ENCODE measurements at regions of chr5 and their contacts with region 1.

Region 1: GRCh38 chr5:179907570-179908324 is at the start of gene TBC1D9B:
- DNase-seq: peak; percentile 73
- H3K4me3 Mint-ChIP-seq: peak within 1 kb of the TSS; percentile 98
- H3K27ac Mint-ChIP-seq: peak within 1 kb of the TSS; percentile 82
- H3K4me1 Mint-ChIP-seq: peaks cover 7% of the 10 kb centered on the region
- H3K27me3 Mint-ChIP-seq: no peaks in the 10 kb centered on the region
- CTCF ChIP-seq: peak; percentile 34
- total RNA-seq, gene TBC1D9B: 162 and 166 TPM in 2 replicates

Region 2: DNA sequence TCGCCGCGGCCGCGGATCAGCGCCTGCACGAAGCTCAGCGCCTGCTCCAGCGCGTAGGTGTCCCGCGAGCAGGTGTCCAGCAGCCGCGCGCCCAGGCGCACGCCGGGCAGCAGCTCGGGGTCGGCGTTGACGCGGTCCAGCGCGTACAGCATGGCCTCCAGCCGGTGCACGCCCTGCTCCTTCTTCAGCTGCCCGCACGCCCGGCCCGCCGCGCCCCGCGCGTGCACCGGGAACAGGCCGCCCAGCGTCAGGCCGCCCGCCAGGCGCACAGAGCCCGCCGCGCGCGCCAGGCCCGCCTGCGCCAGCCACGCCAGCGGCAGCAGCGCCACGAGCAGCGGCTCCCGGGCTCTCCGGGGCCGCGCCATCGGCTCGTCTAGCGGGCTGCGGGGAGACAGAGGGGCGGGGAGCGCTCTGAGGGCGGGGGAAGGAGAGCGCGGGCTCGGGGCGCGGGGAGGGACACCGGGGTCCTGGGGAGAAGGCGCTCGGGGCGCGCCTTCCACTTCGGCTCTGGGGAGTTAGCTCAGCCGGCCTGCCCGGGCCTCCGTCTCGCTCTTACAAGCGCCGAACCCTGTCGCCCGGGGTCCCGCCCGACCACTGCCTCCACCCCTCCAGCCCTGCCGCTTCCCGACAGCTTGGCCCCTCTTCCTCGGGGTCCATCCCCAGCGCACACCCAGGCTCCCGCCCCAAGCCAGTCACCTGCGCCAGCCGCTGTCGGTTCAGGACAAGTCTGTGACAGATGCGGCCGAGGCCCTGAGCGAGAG is 913.0 kb before region 1 on chr5 and contains the start of gene GRM6:
- CTCF ChIA-PET with region 1: no interaction called
- POLR2A ChIA-PET with region 1: no interaction called
- intact Hi-C with region 1: no loop called
- DNase-seq: no peak
- H3K4me3 Mint-ChIP-seq: no peak within 1 kb of the TSS
- H3K27ac Mint-ChIP-seq: no peak within 1 kb of the TSS
- H3K4me1 Mint-ChIP-seq: no peaks in the 10 kb centered on the region
- H3K27me3 Mint-ChIP-seq: no peaks in the 10 kb centered on the region
- CTCF ChIP-seq: no peak
- total RNA-seq, gene GRM6: not detected in 2 replicates

Region 3: DNA sequence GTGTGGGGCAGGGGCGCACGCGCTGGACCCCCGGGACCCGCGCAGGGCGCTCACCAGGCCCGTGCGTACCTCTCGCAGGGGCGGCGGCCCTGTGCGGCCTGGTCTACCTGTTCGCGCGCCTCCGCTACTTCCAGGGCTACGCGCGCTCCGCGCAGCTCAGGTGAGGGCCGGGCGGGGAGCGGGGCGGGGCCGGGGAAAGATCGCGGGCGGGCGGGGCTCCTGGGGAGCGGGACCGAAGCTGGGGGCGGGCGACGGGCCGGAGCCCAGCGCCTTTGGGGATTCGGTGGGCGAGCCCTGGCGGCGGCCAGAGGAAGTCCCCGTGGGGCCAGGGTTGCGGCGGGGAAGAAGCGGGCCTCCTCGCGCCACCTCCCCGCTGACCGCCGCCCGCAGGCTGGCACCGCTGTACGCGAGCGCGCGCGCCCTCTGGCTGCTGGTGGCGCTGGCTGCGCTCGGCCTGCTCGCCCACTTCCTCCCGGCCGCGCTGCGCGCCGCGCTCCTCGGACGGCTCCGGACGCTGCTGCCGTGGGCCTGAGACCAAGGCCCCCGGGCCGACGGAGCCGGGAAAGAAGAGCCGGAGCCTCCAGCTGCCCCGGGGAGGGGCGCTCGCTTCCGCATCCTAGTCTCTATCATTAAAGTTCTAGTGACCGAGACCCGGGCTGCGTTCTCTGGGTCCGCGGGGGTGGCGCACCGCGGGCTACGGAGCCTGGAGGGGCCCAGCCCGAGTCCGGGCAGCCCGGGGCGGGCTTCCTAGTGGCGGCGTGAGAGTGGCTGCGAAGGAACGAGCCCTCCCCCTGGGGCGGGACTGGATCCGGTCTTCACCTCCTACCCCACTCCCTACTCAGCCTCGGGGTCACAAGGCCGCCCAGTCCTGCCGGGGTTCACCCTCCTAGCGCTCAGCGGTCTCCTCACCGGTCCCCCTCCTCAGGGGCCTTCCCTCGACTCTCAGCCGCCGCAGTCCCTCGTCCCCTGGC is 111.6 kb before region 1 on chr5:
- CTCF ChIA-PET with region 1: no interaction called
- POLR2A ChIA-PET with region 1: no interaction called
- intact Hi-C with region 1: loop called (anchors 2 kb)
- DNase-seq: peak; percentile 88
- H3K4me3 Mint-ChIP-seq: peak overlapping the region; percentile 71
- H3K27ac Mint-ChIP-seq: peak overlapping the region; percentile 26
- H3K4me1 Mint-ChIP-seq: peaks cover 8% of the 10 kb centered on the region
- H3K27me3 Mint-ChIP-seq: no peaks in the 10 kb centered on the region
- CTCF ChIP-seq: peak; percentile 86

Region 4: GRCh38 chr5:179967489-179967888 is 59.7 kb after region 1 on chr5:
- CTCF ChIA-PET with region 1: no interaction called
- POLR2A ChIA-PET with region 1: no interaction called
- intact Hi-C with region 1: no loop called
- DNase-seq: no peak
- H3K4me3 Mint-ChIP-seq: no peak overlapping the region
- H3K27ac Mint-ChIP-seq: no peak overlapping the region
- H3K4me1 Mint-ChIP-seq: no peaks in the 10 kb centered on the region
- H3K27me3 Mint-ChIP-seq: no peaks in the 10 kb centered on the region
- CTCF ChIP-seq: no peak

Region 5: DNA sequence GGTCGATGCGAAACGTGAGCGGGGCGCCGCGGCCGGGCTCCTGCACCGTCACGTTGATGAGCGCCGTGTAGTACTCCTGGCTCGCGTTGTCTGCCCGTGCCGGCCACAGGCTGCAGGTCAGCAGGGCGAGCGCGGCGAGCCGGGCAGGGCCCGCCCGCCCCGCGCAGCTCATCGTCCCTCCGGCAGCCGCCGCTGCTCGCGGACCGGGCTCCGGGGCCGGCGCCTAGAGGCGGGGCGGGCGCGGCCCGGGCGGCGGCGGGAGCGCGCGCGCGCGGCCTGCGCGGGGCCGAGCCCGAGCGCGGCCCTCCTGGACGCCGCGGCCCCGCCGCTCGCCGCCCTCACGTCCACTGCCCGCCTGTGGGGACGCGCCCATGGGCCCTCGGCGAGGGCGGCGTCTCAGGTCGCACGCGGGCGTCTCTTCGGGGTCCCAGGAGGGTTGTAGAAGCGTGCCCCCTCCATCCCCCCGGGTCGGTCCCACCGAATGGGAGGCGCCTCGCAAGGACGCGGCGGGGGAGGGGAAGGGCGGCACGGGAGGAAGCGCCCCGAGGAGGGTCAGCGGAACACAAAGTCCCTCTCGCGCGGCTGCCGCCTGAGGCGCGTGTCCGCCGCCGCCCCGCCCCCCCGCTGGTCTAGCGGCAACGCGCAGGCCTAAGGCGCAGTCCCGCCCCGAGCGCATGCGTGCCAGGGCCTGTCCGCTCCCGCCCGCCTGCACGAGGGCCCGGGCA is 163.9 kb after region 1 on chr5 and contains the start of gene RNF130:
- CTCF ChIA-PET with region 1: no interaction called
- POLR2A ChIA-PET with region 1: no interaction called
- intact Hi-C with region 1: loop called (anchors 5 kb)
- DNase-seq: peak; percentile 94
- H3K4me3 Mint-ChIP-seq: peak within 1 kb of the TSS; percentile 95
- H3K27ac Mint-ChIP-seq: peak within 1 kb of the TSS; percentile 87
- H3K4me1 Mint-ChIP-seq: peaks cover 23% of the 10 kb centered on the region
- H3K27me3 Mint-ChIP-seq: no peaks in the 10 kb centered on the region
- CTCF ChIP-seq: no peak
- total RNA-seq, gene RNF130: 31.8 and 34.0 TPM in 2 replicates

Region 6: GRCh38 chr5:180214870-180215770 is 307.4 kb after region 1 on chr5:
- CTCF ChIA-PET with region 1: no interaction called
- POLR2A ChIA-PET with region 1: no interaction called
- intact Hi-C with region 1: no loop called
- DNase-seq: no peak
- H3K4me3 Mint-ChIP-seq: no peak overlapping the region
- H3K27ac Mint-ChIP-seq: no peak overlapping the region
- H3K4me1 Mint-ChIP-seq: peaks cover 6% of the 10 kb centered on the region
- H3K27me3 Mint-ChIP-seq: no peaks in the 10 kb centered on the region
- CTCF ChIP-seq: no peak